ENCODE measurements at regions of chr13 and their contacts with region 1.

Region 1: GRCh38 chr13:41061075-41061913 is at the start of gene WBP4:
- DNase-seq: peak; percentile 97
- ATAC-seq: peak; percentile 70
- H3K4me3 ChIP-seq: peak within 1 kb of the TSS; percentile 83 to 99 (median 98)
- H3K4me3 Mint-ChIP-seq: peak within 1 kb of the TSS; percentile 100
- H3K27ac ChIP-seq: peak within 1 kb of the TSS; percentile 86 to 91
- H3K27ac Mint-ChIP-seq: peak within 1 kb of the TSS; percentile 100
- H3K4me1 ChIP-seq: peaks cover 12 to 14% of the 10 kb centered on the region in 2 donors
- H3K4me1 Mint-ChIP-seq: peaks cover 39% of the 10 kb centered on the region
- H3K27me3 ChIP-seq: no peaks in the 10 kb centered on the region
- H3K27me3 Mint-ChIP-seq: no peaks in the 10 kb centered on the region
- CTCF ChIP-seq: no peak
- total RNA-seq, gene WBP4: 10.4 and 10.6 TPM in 2 replicates

Region 2: DNA sequence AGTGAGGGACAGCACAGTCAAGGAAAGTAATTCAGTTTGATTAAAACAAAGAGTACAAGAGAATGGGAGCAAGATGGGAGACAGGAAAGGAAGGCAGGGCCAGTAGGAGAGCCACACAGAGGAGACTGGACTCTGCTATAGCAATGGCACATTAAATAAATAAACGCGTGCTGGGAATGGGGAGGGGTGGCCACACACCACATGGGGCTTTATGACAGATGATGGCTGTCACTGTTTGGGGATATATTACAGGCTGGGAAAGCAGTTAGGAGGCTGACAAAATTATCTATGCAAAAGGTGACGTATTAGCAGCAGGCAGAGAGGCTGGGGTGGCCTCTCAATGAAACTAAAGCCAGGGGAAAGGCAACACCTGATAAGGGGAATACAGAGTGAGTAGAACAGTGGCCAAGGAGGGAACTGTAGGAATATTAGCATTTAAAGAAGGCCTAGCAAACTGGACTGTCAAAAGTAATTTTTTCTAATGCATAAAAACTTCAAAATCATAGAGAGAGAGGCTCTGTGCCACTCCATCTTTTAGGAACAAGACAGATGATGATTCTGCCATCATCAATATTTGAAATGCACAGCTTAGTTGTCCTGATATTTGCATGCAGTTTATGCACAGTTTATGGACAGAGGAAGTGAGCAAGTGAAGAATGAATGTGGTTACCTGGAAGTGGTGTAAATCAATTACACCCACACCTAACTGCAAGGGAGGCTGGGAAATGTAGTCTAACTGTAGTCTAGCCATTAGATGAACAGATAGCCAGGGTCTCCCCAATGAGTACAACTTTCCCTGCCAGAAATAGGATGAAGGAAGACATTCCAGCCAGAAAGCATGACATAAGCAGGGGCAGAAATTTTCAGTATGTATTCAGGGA is 741.4 kb before region 1 on chr13:
- CTCF ChIA-PET with region 1: no interaction called
- POLR2A ChIA-PET with region 1: no interaction called
- intact Hi-C with region 1: no loop called
- DNase-seq: no peak
- ATAC-seq: no peak
- H3K4me3 ChIP-seq: no peak overlapping the region
- H3K4me3 Mint-ChIP-seq: no peak overlapping the region
- H3K27ac ChIP-seq: no peak overlapping the region
- H3K27ac Mint-ChIP-seq: peak overlapping the region; percentile 1
- H3K4me1 ChIP-seq: peaks cover 11 to 12% of the 10 kb centered on the region in 2 donors
- H3K4me1 Mint-ChIP-seq: peaks cover 33% of the 10 kb centered on the region
- H3K27me3 ChIP-seq: no peaks in the 10 kb centered on the region
- H3K27me3 Mint-ChIP-seq: no peaks in the 10 kb centered on the region
- CTCF ChIP-seq: no peak

Region 3: DNA sequence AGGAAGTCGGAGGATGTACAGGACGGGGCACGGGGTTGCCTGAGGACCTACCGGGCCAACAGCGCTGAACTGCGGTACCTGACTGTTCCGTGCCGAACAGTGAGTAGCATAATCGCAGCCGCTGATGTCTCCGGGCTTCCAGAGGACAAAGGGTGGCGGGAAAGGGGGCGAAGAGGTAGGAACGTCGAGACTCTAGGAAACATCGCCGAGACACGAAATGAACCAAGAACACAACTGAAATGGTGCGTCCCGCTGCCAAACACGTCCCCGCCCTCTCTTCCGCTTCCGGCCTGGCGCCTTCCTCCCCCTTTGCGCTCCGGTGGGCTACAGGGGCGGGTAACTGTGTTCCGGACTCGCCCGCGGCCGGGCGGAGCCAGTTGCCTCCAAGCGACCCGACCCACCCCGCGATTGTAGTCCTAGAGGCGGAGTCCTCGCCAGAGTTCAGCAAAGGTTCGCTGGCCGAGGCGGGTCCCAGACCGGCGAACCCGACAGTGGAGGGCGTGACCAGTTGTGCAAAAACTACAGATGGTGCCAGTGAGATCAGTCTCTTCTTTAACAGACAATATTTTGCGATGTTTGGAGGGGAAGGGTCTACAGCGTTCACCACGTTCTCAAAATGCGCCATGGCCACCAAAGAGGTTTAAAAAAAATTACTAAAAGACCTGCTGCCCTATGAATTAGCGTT is 290.2 kb before region 1 on chr13 and contains the start of gene MRPS31:
- CTCF ChIA-PET with region 1: no interaction called
- POLR2A ChIA-PET with region 1: no interaction called
- intact Hi-C with region 1: loop called (anchors 1 kb)
- DNase-seq: peak; percentile 95
- ATAC-seq: peak; percentile 100
- H3K4me3 ChIP-seq: peak within 1 kb of the TSS; percentile 65 to 99 (median 99)
- H3K4me3 Mint-ChIP-seq: peak within 1 kb of the TSS; percentile 100
- H3K27ac ChIP-seq: peak within 1 kb of the TSS; percentile 64 to 88
- H3K27ac Mint-ChIP-seq: peak within 1 kb of the TSS; percentile 97
- H3K4me1 ChIP-seq: peaks cover 12 to 19% of the 10 kb centered on the region in 2 donors
- H3K4me1 Mint-ChIP-seq: peaks cover 21% of the 10 kb centered on the region
- H3K27me3 ChIP-seq: no peaks in the 10 kb centered on the region
- H3K27me3 Mint-ChIP-seq: no peaks in the 10 kb centered on the region
- CTCF ChIP-seq: no peak
- total RNA-seq, gene MRPS31: 29.7 and 34.4 TPM in 2 replicates

Region 4: DNA sequence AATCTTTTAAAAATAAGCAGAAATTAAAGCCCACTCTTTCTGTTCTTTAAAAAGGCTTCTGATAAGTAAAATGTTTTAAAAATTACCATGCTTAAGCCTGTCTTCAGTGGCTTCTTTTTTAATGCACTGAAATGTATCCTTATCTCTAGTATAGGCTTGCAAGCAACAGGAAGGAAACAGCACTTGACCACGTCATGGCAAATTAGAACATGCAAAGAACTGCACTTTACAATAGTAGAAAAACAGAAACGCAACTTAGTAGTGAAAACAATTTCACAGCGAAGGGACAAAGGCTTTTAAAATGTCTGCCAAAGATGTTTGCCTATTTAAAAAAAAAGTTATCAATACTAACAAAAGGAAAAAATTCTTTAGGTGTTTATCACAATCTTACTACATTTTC is 78.5 kb before region 1 on chr13:
- CTCF ChIA-PET with region 1: interaction called, 3 read pairs
- POLR2A ChIA-PET with region 1: interaction called, 4 read pairs
- intact Hi-C with region 1: loop called (anchors 1 kb)
- DNase-seq: peak; percentile 87
- ATAC-seq: peak; percentile 69
- H3K4me3 ChIP-seq: peak overlapping the region; percentile 39 to 94 (median 62)
- H3K4me3 Mint-ChIP-seq: peak overlapping the region; percentile 91
- H3K27ac ChIP-seq: peak overlapping the region; percentile 94 to 97
- H3K27ac Mint-ChIP-seq: peak overlapping the region; percentile 95
- H3K4me1 ChIP-seq: peaks cover 55 to 67% of the 10 kb centered on the region in 2 donors
- H3K4me1 Mint-ChIP-seq: peaks cover 68% of the 10 kb centered on the region
- H3K27me3 ChIP-seq: no peaks in the 10 kb centered on the region
- H3K27me3 Mint-ChIP-seq: no peaks in the 10 kb centered on the region
- CTCF ChIP-seq: no peak

Region 5: DNA sequence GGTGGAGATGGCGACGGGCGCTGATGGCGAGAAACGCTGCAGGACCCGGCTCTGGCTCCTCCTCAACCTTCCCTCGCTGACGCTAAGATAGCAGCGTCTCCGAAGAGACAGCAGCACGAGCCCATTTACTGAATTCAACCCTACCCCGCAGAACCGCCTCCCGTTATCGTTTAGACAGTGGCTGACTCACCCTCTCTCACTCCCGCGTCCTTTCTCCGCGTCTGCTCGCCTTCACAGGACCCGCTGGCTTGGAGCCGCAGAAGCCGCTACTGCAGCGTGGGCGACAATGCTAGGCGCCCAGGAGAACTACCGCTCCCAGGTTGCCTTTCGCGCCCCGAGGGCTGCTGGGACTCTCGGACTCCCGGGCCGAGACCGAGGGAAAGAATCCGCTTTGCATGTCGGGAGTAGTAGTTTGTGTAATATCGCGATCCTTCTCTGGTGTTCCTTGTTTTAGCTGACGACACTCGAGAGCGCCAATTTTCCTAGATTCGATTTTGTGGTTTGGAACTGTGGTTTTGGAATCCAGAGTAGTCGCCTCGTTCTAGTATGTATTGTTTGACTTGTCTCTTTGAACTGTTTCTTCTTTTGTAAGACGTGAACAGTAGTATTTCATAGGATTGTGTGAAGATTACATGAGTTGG is 71.3 kb after region 1 on chr13 and contains the start of gene KBTBD6:
- CTCF ChIA-PET with region 1: no interaction called
- POLR2A ChIA-PET with region 1: no interaction called
- intact Hi-C with region 1: loop called (anchors 1 kb)
- DNase-seq: peak; percentile 94
- ATAC-seq: peak; percentile 97
- H3K4me3 ChIP-seq: peak within 1 kb of the TSS; percentile 68 to 99 (median 84)
- H3K4me3 Mint-ChIP-seq: peak within 1 kb of the TSS; percentile 99
- H3K27ac ChIP-seq: peak within 1 kb of the TSS; percentile 45 to 79
- H3K27ac Mint-ChIP-seq: peak within 1 kb of the TSS; percentile 95
- H3K4me1 ChIP-seq: peaks cover 24% of the 10 kb centered on the region in 2 donors
- H3K4me1 Mint-ChIP-seq: peaks cover 43% of the 10 kb centered on the region
- H3K27me3 ChIP-seq: no peaks in the 10 kb centered on the region
- H3K27me3 Mint-ChIP-seq: no peaks in the 10 kb centered on the region
- CTCF ChIP-seq: no peak
- total RNA-seq, gene KBTBD6: 8.5 and 8.8 TPM in 2 replicates

Region 6: GRCh38 chr13:41159174-41159573 is 97.9 kb after region 1 on chr13:
- CTCF ChIA-PET with region 1: no interaction called
- POLR2A ChIA-PET with region 1: no interaction called
- intact Hi-C with region 1: no loop called
- DNase-seq: no peak
- ATAC-seq: no peak
- H3K4me3 ChIP-seq: no peak overlapping the region
- H3K4me3 Mint-ChIP-seq: no peak overlapping the region
- H3K27ac ChIP-seq: no peak overlapping the region
- H3K27ac Mint-ChIP-seq: no peak overlapping the region
- H3K4me1 ChIP-seq: no peaks in the 10 kb centered on the region
- H3K4me1 Mint-ChIP-seq: no peaks in the 10 kb centered on the region
- H3K27me3 ChIP-seq: no peaks in the 10 kb centered on the region
- H3K27me3 Mint-ChIP-seq: no peaks in the 10 kb centered on the region
- CTCF ChIP-seq: no peak

Region 7: GRCh38 chr13:41263261-41264027 is 202.2 kb after region 1 on chr13 and contains the start of gene MTRF1:
- CTCF ChIA-PET with region 1: interaction called, 5 read pairs
- POLR2A ChIA-PET with region 1: no interaction called
- intact Hi-C with region 1: loop called (anchors 1 kb)
- DNase-seq: peak; percentile 92
- ATAC-seq: peak; percentile 92
- H3K4me3 ChIP-seq: peak within 1 kb of the TSS; percentile 62 to 95 (median 76)
- H3K4me3 Mint-ChIP-seq: peak within 1 kb of the TSS; percentile 96
- H3K27ac ChIP-seq: peak within 1 kb of the TSS; percentile 79 to 92
- H3K27ac Mint-ChIP-seq: peak within 1 kb of the TSS; percentile 98
- H3K4me1 ChIP-seq: peaks cover 6 to 7% of the 10 kb centered on the region in 2 donors
- H3K4me1 Mint-ChIP-seq: peaks cover 21% of the 10 kb centered on the region
- H3K27me3 ChIP-seq: no peaks in the 10 kb centered on the region
- H3K27me3 Mint-ChIP-seq: no peaks in the 10 kb centered on the region
- CTCF ChIP-seq: no peak
- total RNA-seq, gene MTRF1: 29.8 and 36.0 TPM in 2 replicates

Measured in B cell (primary cell).